Lower leg skin (tissue), 4 donors: ENCODE measurements at regions of chr12 and their contacts with region 1.

Region 1: DNA sequence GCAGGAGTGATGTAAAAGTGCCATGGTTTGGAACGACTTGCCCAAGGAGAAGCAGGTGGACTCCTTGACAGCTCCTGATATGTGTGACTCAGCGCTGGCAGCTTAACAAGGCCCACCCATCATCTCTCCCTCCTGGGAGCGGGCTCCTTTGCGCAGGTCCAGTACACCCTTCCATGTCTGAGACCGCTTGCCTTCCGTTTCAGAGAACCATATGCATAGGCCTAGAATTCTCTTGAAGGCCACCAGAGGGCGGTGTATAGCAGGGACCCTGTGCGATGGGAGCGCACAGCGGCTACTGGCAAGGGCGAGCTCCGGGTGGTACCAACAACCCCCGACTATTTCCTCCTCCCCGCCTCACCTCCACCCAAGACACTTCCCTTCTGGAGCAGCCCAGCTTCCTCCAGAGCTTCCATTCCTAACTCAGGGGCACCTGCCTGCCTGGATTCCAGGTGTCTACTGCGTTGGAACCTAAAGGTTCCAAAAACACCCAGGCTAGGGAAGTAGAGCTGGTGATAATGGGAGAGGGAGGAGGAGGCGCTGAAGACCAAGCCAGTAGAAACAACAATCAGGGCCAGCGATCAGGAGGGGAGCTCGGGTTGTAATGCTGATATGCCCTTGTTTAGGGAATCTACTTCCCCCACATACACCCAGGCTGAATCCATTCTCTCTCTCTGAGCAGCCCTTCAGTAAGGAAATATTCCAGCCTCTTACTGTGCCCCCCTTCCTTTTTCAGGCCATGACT is 6.2 kb downstream of the DHH start:
- DNase-seq: peak in 1 of 2 donors; percentile 91
- H3K4me3 ChIP-seq: no peak overlapping the region
- CTCF ChIP-seq: peak in 1 of 3 donors; percentile 68
- POLR2A ChIP-seq: no peak

Region 2: GRCh38 chr12:49121047-49121696 is 32.8 kb after region 1 on chr12:
- intact Hi-C with region 1: loop called (anchors 5 kb)
- DNase-seq: no peak
- H3K4me3 ChIP-seq: no peak overlapping the region
- CTCF ChIP-seq: peak in 1 of 3 donors; percentile 20
- POLR2A ChIP-seq: no peak

Region 3: GRCh38 chr12:49232940-49233841 is 144.8 kb after region 1 on chr12:
- intact Hi-C with region 1: loop called (anchors 10 kb)
- DNase-seq: peak in 1 of 2 donors; percentile 21
- H3K4me3 ChIP-seq: no peak overlapping the region
- CTCF ChIP-seq: no peak
- POLR2A ChIP-seq: no peak